Spleen (tissue), 13 donors: ENCODE measurements at regions of chr2 and their contacts with region 1.

Region 1: GRCh38 chr2:168136392-168136977 is 110.9 kb downstream of the STK39 start:
- DNase-seq: no peak
- H3K4me3 ChIP-seq: no peak overlapping the region
- H3K27ac ChIP-seq: no peak overlapping the region
- H3K4me1 ChIP-seq: peaks cover 0 to 13% (median 0%) of the 10 kb centered on the region in 6 donors
- H3K27me3 ChIP-seq: no peaks in the 10 kb centered on the region
- CTCF ChIP-seq: peak in 10 of 11 experiments; percentile 28 to 66 (median 52)
- POLR2A ChIP-seq: no peak

Region 2: DNA sequence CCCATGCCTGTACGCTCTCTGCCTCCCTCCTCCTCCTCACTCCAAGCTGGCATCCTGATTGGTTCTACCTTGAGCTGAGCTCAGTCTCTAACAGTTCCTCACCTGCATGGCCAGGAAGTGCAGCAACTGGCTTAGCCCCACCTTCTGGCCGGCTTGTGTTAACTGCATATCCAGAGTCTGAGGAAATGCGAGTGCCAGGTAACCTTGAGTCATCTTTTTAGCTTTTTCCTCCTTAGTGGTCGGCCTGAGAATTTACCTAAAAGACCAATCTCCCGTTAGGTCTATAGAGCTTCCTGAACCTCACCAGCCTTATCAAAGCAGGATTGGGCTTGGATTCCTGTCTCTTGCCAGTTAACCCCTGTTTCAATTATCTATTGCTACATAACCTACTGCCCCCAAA is 200.4 kb after region 1 on chr2:
- intact Hi-C with region 1: loop called (anchors 10 kb)
- DNase-seq: peak; percentile 78
- H3K4me3 ChIP-seq: no peak overlapping the region
- H3K27ac ChIP-seq: no peak overlapping the region
- H3K4me1 ChIP-seq: no peaks in the 10 kb centered on the region
- H3K27me3 ChIP-seq: no peaks in the 10 kb centered on the region
- CTCF ChIP-seq: peak in 4 of 11 experiments; percentile 31 to 50 (median 38)
- POLR2A ChIP-seq: no peak